Endothelial cell of umbilical vein (primary cell): ENCODE measurements at regions of chr15 and their contacts with region 1.

Region 1: DNA sequence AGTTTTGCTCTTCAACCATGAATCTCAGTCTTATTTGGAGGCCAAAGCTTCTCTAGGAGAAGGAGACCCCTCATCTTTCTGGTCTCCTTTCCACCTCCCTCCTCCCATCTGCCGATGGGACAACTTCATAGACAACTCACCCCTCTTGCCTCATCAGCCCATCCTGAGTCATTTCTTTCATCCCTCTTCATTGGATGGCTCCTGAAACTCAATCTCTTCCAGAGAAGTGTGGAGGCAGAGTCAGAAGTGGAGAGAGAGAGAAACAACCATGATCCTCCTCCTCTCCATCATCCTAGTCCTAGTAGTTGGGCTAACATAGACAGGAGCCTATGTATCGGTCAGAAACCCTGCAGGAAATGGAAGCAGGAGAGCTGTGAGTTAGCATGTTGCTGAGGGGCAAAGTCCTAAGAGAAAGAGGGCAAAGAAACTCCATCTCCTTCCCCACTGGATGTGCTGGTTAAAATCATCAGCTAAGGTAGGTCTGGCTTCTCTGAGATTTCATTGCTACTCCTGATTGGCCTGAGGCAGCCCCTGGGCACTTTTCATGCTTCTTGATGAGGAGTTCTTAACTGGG is 21.3 kb upstream of the HCN4 start:
- DNase-seq: no peak
- H3K4me3 ChIP-seq: no peak overlapping the region
- H3K27ac ChIP-seq: no peak overlapping the region
- H3K4me1 ChIP-seq: no peaks in the 10 kb centered on the region
- H3K27me3 ChIP-seq: no peaks in the 10 kb centered on the region
- CTCF ChIP-seq: no peak
- POLR2A ChIP-seq: no peak

Region 2: GRCh38 chr15:73357999-73358665 is 31.9 kb before region 1 on chr15:
- CTCF ChIA-PET with region 1: no interaction called
- POLR2A ChIA-PET with region 1: no interaction called
- dilution Hi-C with region 1: no loop called
- intact Hi-C with region 1: loop called (anchors 1 kb)
- DNase-seq: no peak
- H3K4me3 ChIP-seq: no peak overlapping the region
- H3K27ac ChIP-seq: no peak overlapping the region
- H3K4me1 ChIP-seq: no peaks in the 10 kb centered on the region
- H3K27me3 ChIP-seq: no peaks in the 10 kb centered on the region
- CTCF ChIP-seq: no peak
- POLR2A ChIP-seq: no peak